Common myeloid progenitor, CD34-positive (primary cell): ENCODE measurements at regions of chr2 and their contacts with region 1.

Region 1: DNA sequence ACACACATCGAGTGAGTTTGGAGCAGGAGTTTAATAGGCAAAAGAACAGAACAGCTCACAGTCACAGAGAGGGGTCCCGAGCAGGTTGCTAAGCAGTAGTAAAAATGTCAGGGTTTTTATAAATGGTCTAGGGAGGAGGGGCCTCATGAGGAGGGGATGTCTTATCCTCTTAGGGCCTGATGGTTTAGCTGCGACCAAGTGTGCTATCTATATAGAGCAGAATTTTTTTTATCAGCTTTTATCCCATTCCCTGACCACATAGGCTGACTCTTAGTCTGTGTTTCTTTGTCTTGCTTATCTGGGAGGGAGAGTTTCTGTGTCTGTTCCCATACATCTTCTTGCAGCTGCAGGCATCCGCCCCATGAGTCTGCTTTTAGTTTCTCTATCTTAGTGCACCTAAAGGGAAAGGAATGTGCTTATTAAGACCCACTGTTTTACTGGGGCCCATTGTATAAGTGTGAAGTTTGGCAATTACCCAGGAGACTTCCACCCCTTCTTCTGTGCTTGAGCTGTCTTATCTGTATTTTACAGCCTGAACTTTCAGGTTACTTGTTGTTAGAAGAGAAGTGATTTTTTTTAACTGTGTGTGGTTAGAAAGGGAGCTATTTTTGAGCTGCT is 30.4 kb upstream of the GMCL1 start:
- DNase-seq: peak; percentile 86 to 97 (median 93)
- H3K4me3 ChIP-seq: peak overlapping the region; percentile 7 to 85 (median 66)
- H3K27ac ChIP-seq: peak overlapping the region; percentile 75 to 82
- H3K4me1 ChIP-seq: peaks cover 18 to 84% (median 40%) of the 10 kb centered on the region in 4 experiments
- H3K27me3 ChIP-seq: no peaks in the 10 kb centered on the region

Region 2: GRCh38 chr2:69741619-69742466 is 57.2 kb before region 1 on chr2 and contains the start of gene ANXA4:
- CTCF ChIA-PET with region 1: interaction called, 8 read pairs
- POLR2A ChIA-PET with region 1: interaction called, 10 read pairs
- DNase-seq: peak; percentile 42 to 59 (median 53)
- H3K4me3 ChIP-seq: peak within 1 kb of the TSS; percentile 71 to 95 (median 76)
- H3K27ac ChIP-seq: peak within 1 kb of the TSS; percentile 54 to 71
- H3K4me1 ChIP-seq: peaks cover 2 to 26% (median 17%) of the 10 kb centered on the region in 4 experiments
- H3K27me3 ChIP-seq: no peaks in the 10 kb centered on the region

Region 3: GRCh38 chr2:69767034-69767433 is 32.0 kb before region 1 on chr2:
- CTCF ChIA-PET with region 1: interaction called, 11 read pairs
- POLR2A ChIA-PET with region 1: no interaction called
- DNase-seq: peak in 1 of 3 donors; percentile 47
- H3K4me3 ChIP-seq: no peak overlapping the region
- H3K27ac ChIP-seq: no peak overlapping the region
- H3K4me1 ChIP-seq: peaks cover 0 to 20% (median 11%) of the 10 kb centered on the region in 4 experiments
- H3K27me3 ChIP-seq: no peaks in the 10 kb centered on the region

Region 4: DNA sequence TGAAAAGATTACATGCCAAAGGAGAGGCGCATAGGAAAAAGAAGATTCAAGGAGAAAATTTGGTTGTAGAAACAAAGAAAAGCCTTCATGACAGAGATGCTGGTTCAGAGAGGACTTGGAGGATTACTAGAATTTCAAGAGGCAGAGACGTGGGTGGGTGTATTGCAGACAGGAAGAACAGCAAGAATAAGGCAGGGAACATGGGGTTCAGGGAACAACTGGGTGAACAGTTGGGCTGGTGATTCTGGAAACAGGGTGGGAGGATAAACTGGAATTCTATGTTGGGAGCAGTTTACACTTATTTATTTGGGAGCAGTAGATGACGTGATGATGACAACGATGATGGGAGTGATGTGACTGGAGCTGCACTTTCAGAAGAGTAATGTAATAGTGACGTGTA is 12.0 kb after region 1 on chr2:
- CTCF ChIA-PET with region 1: interaction called, 56 read pairs
- POLR2A ChIA-PET with region 1: interaction called, 3 read pairs
- DNase-seq: no peak
- H3K4me3 ChIP-seq: no peak overlapping the region
- H3K27ac ChIP-seq: no peak overlapping the region
- H3K4me1 ChIP-seq: peaks cover 0 to 3% (median 0%) of the 10 kb centered on the region in 4 experiments
- H3K27me3 ChIP-seq: no peaks in the 10 kb centered on the region